ENCODE measurements at regions of chr5 and their contacts with region 1.

Region 1: DNA sequence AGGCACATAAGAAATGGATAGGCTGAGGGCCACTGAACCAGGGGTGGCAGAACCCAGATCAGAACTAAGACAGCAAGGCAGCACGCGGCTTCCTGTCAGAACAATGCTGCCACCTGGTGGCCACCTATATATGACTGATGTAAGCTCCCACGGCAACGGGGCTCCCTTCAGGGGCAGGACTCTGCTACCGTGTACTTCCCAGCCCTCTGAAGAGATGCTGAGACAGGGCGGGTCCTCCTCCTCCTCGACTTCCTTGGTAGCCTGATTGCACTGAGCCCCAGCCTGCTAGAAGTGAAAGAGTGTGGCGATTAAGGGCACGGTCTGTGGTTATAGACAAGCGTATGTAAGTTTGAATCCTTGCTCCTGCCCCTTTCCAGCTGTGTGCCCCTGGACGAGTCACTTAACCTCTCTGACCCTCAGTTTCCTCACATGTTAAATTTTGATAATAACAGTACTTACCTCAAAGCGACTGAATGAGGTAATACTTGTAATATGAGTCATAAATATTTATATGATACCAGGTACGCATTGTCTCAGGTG is 13.3 kb downstream of the RPS14 start:
- DNase-seq: peak; percentile 95
- H3K4me3 Mint-ChIP-seq: no peak overlapping the region
- H3K27ac Mint-ChIP-seq: no peak overlapping the region
- H3K4me1 Mint-ChIP-seq: peaks cover 18% of the 10 kb centered on the region
- H3K27me3 Mint-ChIP-seq: peaks cover 20% of the 10 kb centered on the region
- CTCF ChIP-seq: peak; percentile 90

Region 2: DNA sequence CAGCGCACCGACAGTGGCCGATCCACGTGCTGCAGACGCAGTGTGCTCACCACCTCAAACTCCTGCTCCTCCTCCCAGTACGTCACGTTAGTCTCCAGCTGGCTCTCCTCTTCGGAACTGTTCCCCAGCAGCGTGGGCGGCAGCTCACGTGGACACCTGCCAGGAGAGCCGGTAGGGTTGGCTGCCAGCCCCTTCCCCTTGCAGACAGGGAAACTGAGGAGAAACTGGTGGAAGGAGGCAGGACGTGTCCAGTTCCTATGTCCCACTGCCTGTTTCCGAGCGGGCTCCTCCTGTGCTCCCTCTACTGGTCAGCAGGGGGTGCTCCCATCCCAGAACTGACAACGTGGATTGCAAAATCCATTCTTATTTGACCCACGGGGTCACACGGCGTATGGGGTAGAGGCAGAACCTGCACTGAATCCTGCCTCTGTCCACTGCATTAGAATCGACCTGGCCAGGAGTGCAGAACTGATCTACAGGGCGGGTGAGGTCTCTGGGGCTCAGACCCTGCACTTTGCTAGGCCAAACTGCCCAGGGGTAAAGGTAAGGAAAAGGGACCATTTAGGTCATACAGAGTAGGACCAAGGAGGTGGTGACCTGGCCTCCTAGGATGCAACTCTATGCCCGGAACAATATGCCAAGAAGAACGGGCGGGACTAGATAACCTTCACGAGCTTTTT is 306.3 kb before region 1 on chr5:
- CTCF ChIA-PET with region 1: no interaction called
- intact Hi-C with region 1: loop called (anchors 2 kb)
- DNase-seq: peak; percentile 84
- H3K4me3 Mint-ChIP-seq: peak overlapping the region; percentile 61
- H3K27ac Mint-ChIP-seq: no peak overlapping the region
- H3K4me1 Mint-ChIP-seq: peaks cover 8% of the 10 kb centered on the region
- H3K27me3 Mint-ChIP-seq: peaks cover 22% of the 10 kb centered on the region
- CTCF ChIP-seq: peak; percentile 94

Region 3: DNA sequence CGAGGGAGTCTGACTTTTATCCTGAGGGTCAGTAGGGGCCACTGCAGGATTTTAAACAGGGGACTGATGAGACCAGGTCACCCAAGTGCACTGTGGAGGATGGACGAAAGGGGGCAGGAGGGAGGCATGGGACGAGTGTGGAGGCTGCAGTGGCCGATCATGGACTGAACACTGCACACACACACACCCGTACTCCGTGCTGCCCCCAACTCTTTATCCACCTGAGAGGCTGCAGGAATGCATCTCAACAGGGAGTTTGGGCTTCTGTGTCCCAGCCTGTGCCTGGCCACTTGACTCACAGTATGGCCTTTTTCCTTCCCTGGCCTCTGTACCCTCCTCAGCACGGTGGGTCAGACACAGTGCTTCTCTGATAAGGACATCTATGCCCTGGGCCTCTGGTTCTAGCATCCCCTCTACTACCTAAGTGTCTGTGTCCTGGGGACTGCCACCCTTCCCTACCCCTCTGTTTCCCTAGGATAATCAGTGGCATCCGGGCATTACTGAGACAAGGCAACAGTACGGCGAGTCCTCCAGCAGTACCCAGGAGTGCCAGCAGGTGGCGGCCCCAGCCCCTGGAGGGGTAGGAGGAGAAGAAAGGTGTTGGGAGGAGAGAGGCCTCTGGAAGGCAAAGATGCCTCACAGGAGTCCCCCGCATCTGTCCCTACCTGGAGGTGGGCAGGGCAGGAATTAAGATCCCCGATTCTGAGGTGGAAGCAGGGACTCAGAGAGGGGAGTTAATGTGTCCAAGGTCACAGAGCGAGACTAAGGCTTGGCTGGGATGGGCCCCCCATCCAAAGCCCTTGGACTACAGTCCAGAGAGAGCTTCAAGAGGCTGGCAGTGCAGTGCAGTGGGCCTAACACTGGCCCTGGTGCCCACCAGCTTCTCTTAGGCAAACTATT is 274.7 kb before region 1 on chr5:
- CTCF ChIA-PET with region 1: interaction called, 5 read pairs
- intact Hi-C with region 1: loop called (anchors 1 kb)
- DNase-seq: peak; percentile 97
- H3K4me3 Mint-ChIP-seq: no peak overlapping the region
- H3K27ac Mint-ChIP-seq: no peak overlapping the region
- H3K4me1 Mint-ChIP-seq: peaks cover 26% of the 10 kb centered on the region
- H3K27me3 Mint-ChIP-seq: peaks cover 17% of the 10 kb centered on the region
- CTCF ChIP-seq: peak; percentile 96

Region 4: GRCh38 chr5:150272526-150272925 is 163.7 kb before region 1 on chr5:
- CTCF ChIA-PET with region 1: interaction called, 3 read pairs
- intact Hi-C with region 1: loop called (anchors 1 kb)
- DNase-seq: peak; percentile 50
- H3K4me3 Mint-ChIP-seq: no peak overlapping the region
- H3K27ac Mint-ChIP-seq: no peak overlapping the region
- H3K4me1 Mint-ChIP-seq: no peaks in the 10 kb centered on the region
- H3K27me3 Mint-ChIP-seq: peaks cover 53% of the 10 kb centered on the region
- CTCF ChIP-seq: no peak

Region 5: GRCh38 chr5:150397782-150398721 is 38.2 kb before region 1 on chr5:
- CTCF ChIA-PET with region 1: interaction called, 12 read pairs
- intact Hi-C with region 1: no loop called
- DNase-seq: no peak
- H3K4me3 Mint-ChIP-seq: no peak overlapping the region
- H3K27ac Mint-ChIP-seq: no peak overlapping the region
- H3K4me1 Mint-ChIP-seq: no peaks in the 10 kb centered on the region
- H3K27me3 Mint-ChIP-seq: no peaks in the 10 kb centered on the region
- CTCF ChIP-seq: no peak

Region 6: GRCh38 chr5:150409638-150410523 is 26.3 kb before region 1 on chr5:
- CTCF ChIA-PET with region 1: interaction called, 17 read pairs
- intact Hi-C with region 1: loop called (anchors 2 kb)
- DNase-seq: peak; percentile 88
- H3K4me3 Mint-ChIP-seq: peak overlapping the region; percentile 95
- H3K27ac Mint-ChIP-seq: peak overlapping the region; percentile 94
- H3K4me1 Mint-ChIP-seq: peaks cover 40% of the 10 kb centered on the region
- H3K27me3 Mint-ChIP-seq: no peaks in the 10 kb centered on the region
- CTCF ChIP-seq: no peak

Region 7: GRCh38 chr5:150560401-150561193 is 124.4 kb after region 1 on chr5:
- CTCF ChIA-PET with region 1: no interaction called
- intact Hi-C with region 1: no loop called
- DNase-seq: peak; percentile 95
- H3K4me3 Mint-ChIP-seq: no peak overlapping the region
- H3K27ac Mint-ChIP-seq: peak overlapping the region; percentile 86
- H3K4me1 Mint-ChIP-seq: peaks cover 8% of the 10 kb centered on the region
- H3K27me3 Mint-ChIP-seq: no peaks in the 10 kb centered on the region
- CTCF ChIP-seq: peak; percentile 79